ENCODE measurements at regions of chr2 and their contacts with region 1.

Region 1: GRCh38 chr2:156341452-156342253 is 9.1 kb upstream of the NR4A2 start:
- DNase-seq: peak; percentile 97
- H3K4me3 ChIP-seq: peak overlapping the region; percentile 90 to 93 (median 92)
- H3K27ac ChIP-seq: peak overlapping the region; percentile 99 to 100 (median 100)
- H3K4me1 ChIP-seq: peaks cover 11 to 42% (median 38%) of the 10 kb centered on the region in 4 donors
- H3K27me3 ChIP-seq: no peaks in the 10 kb centered on the region
- CTCF ChIP-seq: no peak
- EP300 ChIP-seq: no peak
- POLR2A ChIP-seq: peak; percentile 86

Region 2: GRCh38 chr2:156400706-156401678 is 59.3 kb after region 1 on chr2:
- intact Hi-C with region 1: loop called (anchors 2 kb)
- DNase-seq: peak; percentile 97
- H3K4me3 ChIP-seq: peak overlapping the region; percentile 59 to 76 (median 69)
- H3K27ac ChIP-seq: peak overlapping the region; percentile 88 to 97 (median 92)
- H3K4me1 ChIP-seq: peaks cover 7 to 13% (median 9%) of the 10 kb centered on the region in 4 donors
- H3K27me3 ChIP-seq: no peaks in the 10 kb centered on the region
- CTCF ChIP-seq: no peak
- EP300 ChIP-seq: no peak
- POLR2A ChIP-seq: peak; percentile 15

Region 3: DNA sequence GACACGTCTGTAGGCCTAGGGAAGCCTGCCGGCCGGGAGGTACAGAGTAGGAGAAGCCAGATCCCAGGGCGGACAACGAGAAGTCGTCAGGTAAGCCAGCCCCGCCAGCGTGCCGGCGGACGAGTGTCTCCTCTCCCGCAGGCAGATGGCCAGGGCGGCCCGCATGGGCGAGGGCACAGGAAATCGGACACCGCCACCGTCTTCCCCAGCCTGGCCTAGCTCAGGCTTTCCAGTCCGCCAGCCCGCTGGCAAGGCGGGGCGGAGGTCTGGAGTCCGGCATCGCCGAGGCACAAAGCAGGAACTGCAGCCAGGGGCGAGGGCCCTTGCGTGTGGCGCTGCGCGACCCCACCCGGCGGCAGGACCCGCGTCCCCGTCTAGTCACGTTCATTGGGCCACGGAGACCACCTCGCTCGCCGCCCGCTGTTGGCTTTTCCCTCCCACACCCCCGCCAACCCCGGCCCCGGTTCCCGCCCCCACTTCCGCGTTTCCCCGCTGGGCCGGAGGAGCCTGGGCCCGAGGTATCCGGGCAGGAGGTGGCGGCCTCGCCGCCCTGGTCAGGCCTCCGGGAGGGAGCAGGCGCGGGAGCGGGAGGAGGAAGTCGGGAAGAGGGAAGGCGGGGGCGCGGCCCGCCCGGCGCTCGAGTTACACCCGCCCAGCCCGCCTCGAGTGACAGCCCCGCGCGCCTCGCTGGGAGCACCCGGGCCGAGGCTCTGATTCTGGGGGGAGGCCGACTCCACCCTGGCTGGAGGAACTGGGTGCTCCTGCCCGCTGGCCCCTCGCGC is 94.3 kb after region 1 on chr2 and contains the start of gene GPD2:
- intact Hi-C with region 1: loop called (anchors 2 kb)
- DNase-seq: peak; percentile 97
- H3K4me3 ChIP-seq: peak within 1 kb of the TSS; percentile 66 to 89 (median 81)
- H3K27ac ChIP-seq: peak within 1 kb of the TSS; percentile 92 to 99 (median 98)
- H3K4me1 ChIP-seq: peaks cover 7 to 38% (median 35%) of the 10 kb centered on the region in 4 donors
- H3K27me3 ChIP-seq: no peaks in the 10 kb centered on the region
- CTCF ChIP-seq: peak in 1 of 3 experiments; percentile 6
- EP300 ChIP-seq: no peak
- POLR2A ChIP-seq: peak; percentile 82
- total RNA-seq, gene GPD2: 19.5 to 26.0 (median 22.5) TPM

Region 4: GRCh38 chr2:157032017-157032416 is 690.4 kb after region 1 on chr2:
- intact Hi-C with region 1: loop called (anchors 10 kb)
- DNase-seq: no peak
- H3K4me3 ChIP-seq: no peak overlapping the region
- H3K27ac ChIP-seq: peak overlapping the region in 3 of 4 donors; percentile 24 to 50 (median 36)
- H3K4me1 ChIP-seq: peaks cover 0 to 16% (median 10%) of the 10 kb centered on the region in 4 donors
- H3K27me3 ChIP-seq: no peaks in the 10 kb centered on the region
- CTCF ChIP-seq: no peak
- EP300 ChIP-seq: peak; percentile 35
- POLR2A ChIP-seq: no peak

Measured in esophagus muscularis mucosa (tissue), 4 donors.